Activated CD4-positive, alpha-beta memory T cell treated with anti-CD3 and anti-CD28 coated beads for 36 hours (primary cell): ENCODE measurements at regions of chr1 and their contacts with region 1.

Region 1: GRCh38 chr1:151024540-151025146 is 11.7 kb upstream of the BNIPL start:
- DNase-seq: peak; percentile 88
- H3K4me3 Mint-ChIP-seq: no peak overlapping the region
- H3K27ac Mint-ChIP-seq: peak overlapping the region; percentile 42
- H3K4me1 Mint-ChIP-seq: peaks cover 5% of the 10 kb centered on the region
- H3K27me3 Mint-ChIP-seq: no peaks in the 10 kb centered on the region

Region 2: GRCh38 chr1:151047925-151048645 is 23.4 kb after region 1 on chr1:
- CTCF ChIA-PET with region 1: interaction called, 19 read pairs
- POLR2A ChIA-PET with region 1: interaction called, 4 read pairs
- intact Hi-C with region 1: no loop called
- DNase-seq: peak; percentile 74
- H3K4me3 Mint-ChIP-seq: peak overlapping the region; percentile 88
- H3K27ac Mint-ChIP-seq: peak overlapping the region; percentile 82
- H3K4me1 Mint-ChIP-seq: peaks cover 46% of the 10 kb centered on the region
- H3K27me3 Mint-ChIP-seq: no peaks in the 10 kb centered on the region

Region 3: GRCh38 chr1:151059078-151059907 is 34.6 kb after region 1 on chr1 and contains the start of gene CDC42SE1:
- CTCF ChIA-PET with region 1: interaction called, 11 read pairs
- POLR2A ChIA-PET with region 1: no interaction called
- intact Hi-C with region 1: loop called (anchors 5 kb)
- DNase-seq: peak; percentile 89
- H3K4me3 Mint-ChIP-seq: peak within 1 kb of the TSS; percentile 98
- H3K27ac Mint-ChIP-seq: peak within 1 kb of the TSS; percentile 99
- H3K4me1 Mint-ChIP-seq: peaks cover 56% of the 10 kb centered on the region
- H3K27me3 Mint-ChIP-seq: no peaks in the 10 kb centered on the region
- total RNA-seq, gene CDC42SE1: 135 to 136 TPM

Region 4: GRCh38 chr1:151070474-151071276 is 46.0 kb after region 1 on chr1 and contains the start of gene GABPB2:
- CTCF ChIA-PET with region 1: interaction called, 14 read pairs
- POLR2A ChIA-PET with region 1: no interaction called
- intact Hi-C with region 1: no loop called
- DNase-seq: peak; percentile 93
- H3K4me3 Mint-ChIP-seq: peak within 1 kb of the TSS; percentile 94
- H3K27ac Mint-ChIP-seq: peak within 1 kb of the TSS; percentile 100
- H3K4me1 Mint-ChIP-seq: peaks cover 15% of the 10 kb centered on the region
- H3K27me3 Mint-ChIP-seq: no peaks in the 10 kb centered on the region
- total RNA-seq, gene GABPB2: 13.6 to 14.9 TPM